ENCODE measurements at regions of chr17 and their contacts with region 1.

Region 1: GRCh38 chr17:50361561-50362480 is 11.2 kb downstream of the MRPL27 start:
- DNase-seq: peak; percentile 76
- ATAC-seq: peak; percentile 86
- H3K4me3 Mint-ChIP-seq: no peak overlapping the region
- H3K27ac Mint-ChIP-seq: peak overlapping the region; percentile 84
- H3K4me1 Mint-ChIP-seq: peaks cover 29% of the 10 kb centered on the region
- H3K27me3 Mint-ChIP-seq: no peaks in the 10 kb centered on the region

Region 2: DNA sequence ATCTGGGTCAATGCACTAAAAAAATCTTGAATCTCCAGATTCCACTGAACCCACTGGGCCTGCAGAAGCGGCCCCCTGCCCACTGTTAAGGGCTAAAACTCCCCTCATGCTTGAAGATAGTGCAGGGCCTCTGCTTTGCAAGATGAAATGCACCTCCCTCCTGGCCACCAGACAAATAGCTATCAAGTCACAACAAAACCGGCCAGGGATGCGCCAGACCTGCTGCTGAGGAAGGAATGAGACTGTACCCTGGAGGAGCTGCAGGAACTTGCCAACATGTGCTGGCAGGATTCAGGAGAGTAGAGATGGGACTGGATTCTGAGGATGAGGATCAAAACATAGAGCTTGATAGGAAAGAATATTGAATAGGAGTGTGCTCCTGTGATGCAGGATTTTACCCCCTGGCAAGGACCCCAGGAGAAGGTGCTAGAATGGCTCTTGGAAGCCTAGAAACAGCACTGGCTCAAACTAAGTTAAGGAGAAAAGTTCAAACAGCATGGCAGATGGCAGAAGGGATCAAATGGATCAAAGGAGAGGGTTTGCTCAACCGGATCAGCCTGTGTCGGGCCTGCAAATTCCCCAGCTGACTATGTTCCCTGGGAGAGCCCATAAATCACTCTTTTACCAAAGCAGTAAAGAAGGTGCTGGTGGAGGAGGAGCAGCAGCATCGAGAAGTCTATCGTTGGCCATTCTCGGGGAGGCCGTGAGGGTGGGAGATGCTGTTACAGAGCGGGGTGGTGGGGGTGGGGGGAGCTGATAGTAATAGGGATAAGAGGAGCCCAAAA is 43.1 kb before region 1 on chr17:
- CTCF ChIA-PET with region 1: no interaction called
- POLR2A ChIA-PET with region 1: no interaction called
- DNase-seq: no peak
- ATAC-seq: no peak
- H3K4me3 Mint-ChIP-seq: no peak overlapping the region
- H3K27ac Mint-ChIP-seq: no peak overlapping the region
- H3K4me1 Mint-ChIP-seq: no peaks in the 10 kb centered on the region
- H3K27me3 Mint-ChIP-seq: peaks cover 3% of the 10 kb centered on the region

Region 3: DNA sequence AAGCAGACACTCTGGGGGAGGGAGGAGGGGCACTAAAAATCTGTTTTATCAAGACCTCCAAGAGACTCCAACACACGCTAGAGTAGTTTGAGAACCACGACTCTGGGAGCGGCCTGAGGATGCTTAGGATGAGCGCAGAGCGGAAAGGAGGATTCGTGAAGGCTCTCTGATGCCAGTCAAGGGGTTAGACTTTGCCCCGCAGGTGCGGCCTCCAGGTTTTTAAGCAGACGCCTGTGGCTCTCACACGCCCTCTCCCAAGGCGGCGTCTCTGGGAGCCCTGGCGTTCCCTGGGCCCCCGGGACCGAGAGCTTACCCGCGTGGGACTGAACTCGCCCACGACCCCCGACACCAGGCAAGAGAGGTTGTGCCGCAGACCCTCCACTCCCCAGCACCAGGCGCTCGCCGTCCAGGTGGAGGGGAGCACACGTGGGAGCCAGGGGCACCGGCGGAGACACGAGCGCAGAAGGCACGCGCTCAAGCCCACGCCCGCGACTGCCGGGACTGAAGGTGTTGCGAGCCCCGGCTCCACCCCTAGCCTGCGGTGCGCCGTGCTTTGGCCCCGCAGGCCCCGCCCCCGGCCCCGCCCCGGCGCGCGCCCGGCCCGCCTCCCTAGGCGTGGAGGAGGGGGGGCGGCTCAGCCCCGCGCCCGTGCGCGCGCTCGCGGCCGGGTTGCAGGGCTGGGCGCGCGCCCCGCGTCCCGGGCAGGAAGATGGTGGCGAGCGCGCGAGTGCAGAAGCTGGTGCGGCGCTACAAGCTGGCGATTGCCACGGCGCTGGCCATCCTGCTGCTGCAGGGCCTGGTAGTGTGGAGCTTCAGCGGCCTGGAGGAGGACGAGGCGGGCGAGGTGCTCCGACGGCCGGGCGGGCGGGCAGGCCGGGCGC is 16.1 kb before region 1 on chr17 and contains the start of gene XYLT2:
- CTCF ChIA-PET with region 1: interaction called, 43 read pairs
- POLR2A ChIA-PET with region 1: interaction called, 18 read pairs
- DNase-seq: peak; percentile 91
- ATAC-seq: peak; percentile 90
- H3K4me3 Mint-ChIP-seq: peak within 1 kb of the TSS; percentile 89
- H3K27ac Mint-ChIP-seq: peak within 1 kb of the TSS; percentile 95
- H3K4me1 Mint-ChIP-seq: peaks cover 44% of the 10 kb centered on the region
- H3K27me3 Mint-ChIP-seq: no peaks in the 10 kb centered on the region
- total RNA-seq, gene XYLT2: 24.7 to 26.0 TPM

Region 4: DNA sequence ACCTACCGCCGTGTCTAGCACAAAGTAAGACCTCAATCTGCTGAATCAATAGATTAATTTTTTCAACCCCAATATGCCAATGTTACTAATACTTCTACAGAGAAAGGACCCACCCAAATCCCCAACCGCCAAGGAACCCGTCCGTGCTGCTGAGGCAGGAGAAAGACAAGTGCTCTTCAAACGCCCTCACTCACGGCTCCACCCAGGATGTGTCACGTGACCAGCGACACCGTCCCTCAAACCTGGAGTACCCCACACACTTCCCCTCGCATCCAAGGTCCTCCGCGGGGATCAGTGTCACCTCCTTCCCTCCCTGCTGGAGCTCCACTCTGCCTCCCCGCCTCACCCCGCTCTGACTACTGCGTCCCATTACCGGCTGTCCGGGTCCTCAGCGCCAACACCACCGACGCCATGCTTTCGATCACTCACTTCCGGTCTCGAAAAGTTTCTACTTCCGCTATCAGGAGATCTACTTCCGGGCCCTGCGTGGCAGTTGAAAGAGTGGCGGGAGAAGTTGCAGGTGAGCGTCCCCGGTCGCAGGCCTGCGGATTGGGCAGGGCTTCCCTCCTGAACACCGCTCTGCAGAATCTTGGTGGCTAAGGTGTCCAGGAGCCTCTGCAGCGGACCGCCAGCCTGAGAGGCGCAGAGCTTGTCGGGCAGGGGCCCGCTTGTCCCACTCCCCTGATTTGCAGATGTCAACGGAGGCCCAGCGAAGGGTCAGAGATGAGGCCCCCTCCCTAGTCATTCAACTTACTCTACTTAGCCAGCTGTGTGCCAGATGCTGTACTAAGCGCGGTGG is 11.1 kb after region 1 on chr17 and contains the starts of genes EME1 and MRPL27:
- CTCF ChIA-PET with region 1: interaction called, 65 read pairs
- POLR2A ChIA-PET with region 1: interaction called, 27 read pairs
- DNase-seq: peak; percentile 93
- ATAC-seq: peak; percentile 94
- H3K4me3 Mint-ChIP-seq: peak within 1 kb of the TSS; percentile 99
- H3K27ac Mint-ChIP-seq: peak within 1 kb of the TSS; percentile 100
- H3K4me1 Mint-ChIP-seq: peaks cover 44% of the 10 kb centered on the region
- H3K27me3 Mint-ChIP-seq: no peaks in the 10 kb centered on the region
- total RNA-seq, gene EME1: 23.5 to 27.8 TPM
- total RNA-seq, gene MRPL27: 81.0 to 85.4 TPM

Region 5: GRCh38 chr17:50380369-50381259 is 18.8 kb after region 1 on chr17:
- CTCF ChIA-PET with region 1: interaction called, 65 read pairs
- POLR2A ChIA-PET with region 1: interaction called, 5 read pairs
- DNase-seq: no peak
- ATAC-seq: no peak
- H3K4me3 Mint-ChIP-seq: no peak overlapping the region
- H3K27ac Mint-ChIP-seq: no peak overlapping the region
- H3K4me1 Mint-ChIP-seq: peaks cover 17% of the 10 kb centered on the region
- H3K27me3 Mint-ChIP-seq: no peaks in the 10 kb centered on the region

Region 6: GRCh38 chr17:50386510-50386909 is 24.7 kb after region 1 on chr17:
- CTCF ChIA-PET with region 1: interaction called, 16 read pairs
- POLR2A ChIA-PET with region 1: interaction called, 5 read pairs
- DNase-seq: no peak
- ATAC-seq: no peak
- H3K4me3 Mint-ChIP-seq: no peak overlapping the region
- H3K27ac Mint-ChIP-seq: no peak overlapping the region
- H3K4me1 Mint-ChIP-seq: no peaks in the 10 kb centered on the region
- H3K27me3 Mint-ChIP-seq: no peaks in the 10 kb centered on the region

Region 7: GRCh38 chr17:50397111-50397918 is 35.5 kb after region 1 on chr17 and contains the start of gene LRRC59:
- CTCF ChIA-PET with region 1: interaction called, 84 read pairs
- POLR2A ChIA-PET with region 1: interaction called, 13 read pairs
- DNase-seq: peak; percentile 94
- ATAC-seq: peak; percentile 96
- H3K4me3 Mint-ChIP-seq: peak within 1 kb of the TSS; percentile 93
- H3K27ac Mint-ChIP-seq: peak within 1 kb of the TSS; percentile 94
- H3K4me1 Mint-ChIP-seq: peaks cover 27% of the 10 kb centered on the region
- H3K27me3 Mint-ChIP-seq: no peaks in the 10 kb centered on the region
- total RNA-seq, gene LRRC59: 77.7 to 77.9 TPM

Region 8: DNA sequence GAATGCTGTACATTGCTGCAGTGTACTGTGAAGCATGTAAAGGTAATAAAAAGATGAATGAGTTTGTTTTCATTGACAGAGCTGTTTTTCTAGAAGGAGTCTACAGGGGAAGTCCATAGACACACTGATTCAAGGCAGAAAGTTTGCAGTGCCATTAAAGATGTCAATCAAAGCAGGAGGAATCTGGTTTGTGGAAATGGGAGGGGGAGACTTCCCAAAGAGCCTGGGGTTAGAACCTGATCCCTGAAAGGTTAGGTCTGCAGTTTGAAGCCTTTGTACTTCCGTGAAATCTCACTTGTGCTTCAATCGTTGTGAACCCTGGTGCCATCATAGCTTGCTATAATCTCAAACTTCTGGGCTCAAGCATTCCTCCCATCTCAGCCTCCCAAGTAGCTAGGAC is 69.4 kb after region 1 on chr17:
- CTCF ChIA-PET with region 1: no interaction called
- POLR2A ChIA-PET with region 1: no interaction called
- DNase-seq: no peak
- ATAC-seq: no peak
- H3K4me3 Mint-ChIP-seq: no peak overlapping the region
- H3K27ac Mint-ChIP-seq: no peak overlapping the region
- H3K4me1 Mint-ChIP-seq: peaks cover 25% of the 10 kb centered on the region
- H3K27me3 Mint-ChIP-seq: no peaks in the 10 kb centered on the region

Region 9: GRCh38 chr17:50478391-50479381 is 116.9 kb after region 1 on chr17 and contains the start of gene RSAD1:
- CTCF ChIA-PET with region 1: interaction called, 16 read pairs
- POLR2A ChIA-PET with region 1: interaction called, 3 read pairs
- DNase-seq: peak; percentile 90
- ATAC-seq: peak; percentile 96
- H3K4me3 Mint-ChIP-seq: peak within 1 kb of the TSS; percentile 83
- H3K27ac Mint-ChIP-seq: peak within 1 kb of the TSS; percentile 87
- H3K4me1 Mint-ChIP-seq: peaks cover 18% of the 10 kb centered on the region
- H3K27me3 Mint-ChIP-seq: peaks cover 3% of the 10 kb centered on the region
- total RNA-seq, gene RSAD1: 26.6 to 28.4 TPM

Measured in activated CD8-positive, alpha-beta T cell treated with anti-CD3 and anti-CD28 coated beads, Interleukin-2, amount 10 ng/mL, durations not matched to agents 7 days and 5 days (primary cell).